ENCODE measurements at regions of chr11 and their contacts with region 1.

Region 1: GRCh38 chr11:62671575-62672389 is at the starts of genes LBHD1 and UQCC3:
- DNase-seq: peak; percentile 62

Region 2: GRCh38 chr11:62573592-62574362 is 98.0 kb before region 1 on chr11 and contains the start of gene EEF1G:
- CTCF ChIA-PET with region 1: no interaction called
- POLR2A ChIA-PET with region 1: interaction called, 11 read pairs
- DNase-seq: peak; percentile 98

Region 3: DNA sequence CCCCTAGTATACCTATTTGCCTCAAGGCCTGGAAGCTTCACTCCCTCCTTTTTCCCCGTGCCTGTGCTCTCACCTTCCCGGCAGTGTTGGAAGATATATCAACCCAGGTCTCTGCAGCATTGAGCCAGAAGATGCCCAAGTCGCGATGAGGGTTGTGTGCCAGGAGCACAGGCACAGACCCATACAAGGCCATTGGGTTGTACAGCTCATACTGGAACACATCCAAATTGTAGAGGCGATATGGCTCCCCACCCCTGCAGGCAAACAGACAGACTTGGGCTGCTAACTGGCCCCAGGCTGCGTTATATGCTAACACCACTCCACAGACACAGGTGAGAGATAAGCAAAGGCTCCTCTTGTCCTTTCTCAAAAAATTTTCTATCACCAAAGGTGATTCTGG is 39.3 kb before region 1 on chr11:
- CTCF ChIA-PET with region 1: no interaction called
- POLR2A ChIA-PET with region 1: no interaction called
- DNase-seq: no peak

Region 4: DNA sequence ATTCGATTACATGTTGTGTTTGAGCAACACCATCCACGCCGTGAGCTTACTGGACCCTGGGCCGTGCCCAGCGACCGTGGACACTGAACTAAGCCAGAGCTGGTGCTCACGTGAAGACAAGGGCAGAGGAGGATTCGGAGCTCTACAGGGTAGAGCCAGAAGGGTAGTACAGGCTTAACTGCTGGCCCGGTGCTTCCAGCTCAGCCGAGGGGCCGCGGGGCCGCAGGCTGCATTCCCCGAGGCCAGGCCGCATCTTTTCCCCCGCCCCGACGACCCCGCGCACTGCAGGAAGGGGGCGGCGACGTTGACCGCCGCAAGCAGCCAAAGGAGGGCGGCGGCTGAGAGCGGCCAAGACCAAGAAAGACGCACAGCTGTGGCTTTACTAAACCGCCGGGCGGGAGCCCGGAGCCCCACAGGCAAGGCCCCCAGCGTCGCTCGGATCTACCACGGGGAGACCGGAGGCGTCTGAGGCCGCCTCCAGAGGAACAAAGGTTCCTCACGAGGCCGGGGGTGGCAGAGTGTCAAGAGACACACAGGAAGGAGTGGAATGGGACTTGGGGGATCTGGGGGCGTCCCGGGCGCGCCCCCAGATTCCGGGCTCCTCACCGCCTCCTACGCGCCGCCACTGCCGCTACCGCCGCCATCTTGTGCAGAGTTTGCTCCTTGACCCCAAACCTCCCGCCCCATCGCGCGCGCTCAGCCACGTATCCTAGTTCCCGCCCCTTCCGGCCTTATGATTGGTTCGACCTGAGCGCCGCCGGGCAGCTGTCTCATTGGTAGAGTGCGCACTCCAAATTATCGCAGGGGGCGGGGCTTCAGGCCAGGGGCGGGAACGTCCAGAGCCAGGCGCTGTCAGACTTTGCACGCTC is 25.6 kb before region 1 on chr11 and contains the start of gene GANAB:
- CTCF ChIA-PET with region 1: no interaction called
- POLR2A ChIA-PET with region 1: interaction called, 23 read pairs
- DNase-seq: peak; percentile 99

Region 5: GRCh38 chr11:62689421-62690183 is 17.8 kb after region 1 on chr11 and contains the start of gene LRRN4CL:
- CTCF ChIA-PET with region 1: no interaction called
- POLR2A ChIA-PET with region 1: interaction called, 16 read pairs
- DNase-seq: no peak

Region 6: DNA sequence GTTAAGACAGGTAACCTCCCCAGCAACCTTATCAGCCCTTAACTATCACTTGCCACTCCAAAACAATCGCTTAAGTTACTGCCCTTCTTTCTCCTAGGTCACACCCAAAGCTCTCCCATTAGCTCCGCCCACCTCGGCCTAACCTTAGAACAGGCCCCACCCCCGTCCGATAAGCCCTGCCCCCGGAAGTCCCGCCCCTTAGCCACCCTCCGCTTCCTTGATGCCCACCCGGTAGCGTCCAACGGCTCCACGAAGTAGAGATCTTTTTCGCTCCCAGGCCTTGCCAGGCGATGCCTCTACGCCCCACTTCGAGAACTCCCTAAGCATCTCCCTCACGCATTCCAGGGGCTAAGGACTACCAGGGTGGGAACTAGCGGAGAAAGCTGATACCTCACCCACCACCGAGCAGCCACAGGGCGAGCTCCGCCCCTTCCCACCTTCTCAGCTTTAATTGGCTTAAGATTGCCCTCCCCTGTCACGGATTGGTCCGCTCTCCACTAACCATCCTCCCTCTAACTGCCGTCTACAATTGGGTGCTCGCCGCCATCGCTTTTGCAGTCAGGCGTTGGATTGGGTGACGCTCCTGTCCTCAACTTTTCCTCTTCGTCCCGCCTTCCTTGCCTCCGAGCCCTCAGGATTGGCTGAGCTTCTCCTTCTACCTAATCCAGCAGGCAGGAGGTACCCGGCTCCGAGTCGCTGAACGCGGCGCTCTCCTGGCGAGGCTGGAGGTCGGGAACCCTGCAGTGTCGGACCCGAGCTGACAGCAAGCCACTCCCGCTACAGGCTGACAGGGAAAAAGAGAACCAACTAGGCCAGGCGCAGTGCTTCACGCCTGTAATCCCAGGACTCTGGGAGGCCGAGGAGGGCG is 82.2 kb after region 1 on chr11 and contains the start of gene ZBTB3:
- CTCF ChIA-PET with region 1: no interaction called
- POLR2A ChIA-PET with region 1: interaction called, 14 read pairs
- DNase-seq: peak; percentile 94

Measured in HEK293T (cell line).